Activated CD4-positive, alpha-beta T cell treated with anti-CD3 and anti-CD28 coated beads for 36 hours (primary cell): ENCODE measurements at regions of chrX and their contacts with region 1.

Region 1: GRCh38 chrX:151680805-151681204 is 14.5 kb upstream of the PRRG3 start:
- DNase-seq: peak; percentile 75
- ATAC-seq: peak; percentile 63
- H3K4me3 Mint-ChIP-seq: no peak overlapping the region
- H3K27ac Mint-ChIP-seq: no peak overlapping the region
- H3K4me1 Mint-ChIP-seq: no peaks in the 10 kb centered on the region
- H3K27me3 Mint-ChIP-seq: peaks cover 13% of the 10 kb centered on the region

Region 2: GRCh38 chrX:150772150-150772970 is 908.4 kb before region 1 on chrX:
- CTCF ChIA-PET with region 1: no interaction called
- POLR2A ChIA-PET with region 1: no interaction called
- intact Hi-C with region 1: loop called in 1 of 2 experiments (anchors 5 kb)
- DNase-seq: peak; percentile 87
- ATAC-seq: peak; percentile 82
- H3K4me3 Mint-ChIP-seq: no peak overlapping the region
- H3K27ac Mint-ChIP-seq: no peak overlapping the region
- H3K4me1 Mint-ChIP-seq: peaks cover 6% of the 10 kb centered on the region
- H3K27me3 Mint-ChIP-seq: no peaks in the 10 kb centered on the region

Region 3: GRCh38 chrX:151151665-151152267 is 529.0 kb before region 1 on chrX:
- CTCF ChIA-PET with region 1: interaction called, 6 read pairs
- POLR2A ChIA-PET with region 1: no interaction called
- intact Hi-C with region 1: loop called (anchors 1 kb)
- DNase-seq: peak; percentile 38
- ATAC-seq: peak; percentile 53
- H3K4me3 Mint-ChIP-seq: no peak overlapping the region
- H3K27ac Mint-ChIP-seq: no peak overlapping the region
- H3K4me1 Mint-ChIP-seq: no peaks in the 10 kb centered on the region
- H3K27me3 Mint-ChIP-seq: peaks cover 12% of the 10 kb centered on the region

Region 4: DNA sequence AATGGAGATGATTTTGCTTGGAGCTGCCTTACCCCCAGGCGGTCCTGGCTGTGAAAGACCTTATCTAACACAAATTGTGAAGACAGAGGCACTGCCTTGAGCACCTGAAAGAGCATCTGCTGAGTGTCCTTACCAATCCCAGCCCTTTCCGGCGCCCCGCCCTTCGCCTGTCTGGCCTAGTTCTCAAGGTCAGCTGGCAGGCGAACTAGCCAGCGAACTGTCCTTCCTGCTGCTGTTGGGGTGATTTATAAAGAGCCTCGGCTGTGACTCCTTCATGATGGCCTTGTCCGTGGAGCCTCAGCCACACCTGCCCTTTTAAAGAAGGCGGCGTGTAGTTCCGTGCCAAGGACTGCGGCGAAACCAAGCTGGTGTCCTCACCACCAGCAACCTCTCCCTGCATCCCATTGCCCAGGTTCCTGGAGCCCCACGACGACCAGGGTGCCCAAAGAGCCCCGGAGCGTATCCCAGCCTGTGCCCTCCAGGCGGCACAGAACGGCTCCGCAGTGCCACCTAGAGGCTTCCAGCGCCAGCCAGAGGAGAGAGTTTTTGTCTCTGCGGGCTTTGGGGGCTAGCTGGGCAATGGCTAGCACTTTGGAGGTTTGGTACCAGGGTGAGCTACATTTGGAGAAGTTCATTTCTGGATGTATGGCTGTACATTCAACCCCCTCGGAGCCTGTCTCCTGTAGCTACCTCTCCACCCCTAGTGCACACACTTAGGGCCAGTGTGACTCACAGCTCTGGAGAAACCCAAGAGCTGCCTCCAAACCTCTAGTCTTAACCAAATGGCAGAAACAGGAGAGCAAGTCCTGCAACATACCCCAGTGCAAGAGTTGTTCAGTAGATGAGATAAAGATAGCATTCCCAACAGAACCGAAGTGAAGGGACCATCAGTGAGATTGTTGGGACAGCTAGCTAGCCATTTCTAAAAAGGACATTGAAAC is 320.6 kb before region 1 on chrX:
- CTCF ChIA-PET with region 1: no interaction called
- POLR2A ChIA-PET with region 1: no interaction called
- intact Hi-C with region 1: loop called in 1 of 2 experiments (anchors 5 kb)
- DNase-seq: peak; percentile 62
- ATAC-seq: peak; percentile 57
- H3K4me3 Mint-ChIP-seq: peak overlapping the region; percentile 32
- H3K27ac Mint-ChIP-seq: no peak overlapping the region
- H3K4me1 Mint-ChIP-seq: no peaks in the 10 kb centered on the region
- H3K27me3 Mint-ChIP-seq: peaks cover 8% of the 10 kb centered on the region

Region 5: DNA sequence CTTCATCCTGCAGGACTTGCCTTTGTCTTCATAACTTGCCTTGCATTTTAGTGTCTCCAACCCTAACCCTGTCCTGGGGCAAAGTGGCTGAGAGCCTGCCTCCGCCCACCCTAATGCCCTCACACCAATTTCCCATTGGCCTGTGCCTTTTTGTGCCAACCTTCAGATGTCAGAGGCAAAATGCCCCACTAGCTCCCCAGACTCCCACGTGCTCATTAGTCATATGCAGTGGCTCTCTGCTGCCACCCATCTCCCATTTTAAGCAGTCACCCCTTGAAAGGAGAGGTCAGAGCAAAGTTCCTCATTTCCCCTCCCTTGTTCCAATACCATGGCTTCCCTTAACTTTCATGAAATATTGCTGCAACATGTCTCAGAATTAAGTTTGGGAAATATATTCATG is 192.1 kb before region 1 on chrX:
- CTCF ChIA-PET with region 1: no interaction called
- POLR2A ChIA-PET with region 1: no interaction called
- intact Hi-C with region 1: loop called in 1 of 2 experiments (anchors 5 kb)
- DNase-seq: peak; percentile 35
- ATAC-seq: peak; percentile 55
- H3K4me3 Mint-ChIP-seq: no peak overlapping the region
- H3K27ac Mint-ChIP-seq: no peak overlapping the region
- H3K4me1 Mint-ChIP-seq: peaks cover 3% of the 10 kb centered on the region
- H3K27me3 Mint-ChIP-seq: no peaks in the 10 kb centered on the region

Region 6: DNA sequence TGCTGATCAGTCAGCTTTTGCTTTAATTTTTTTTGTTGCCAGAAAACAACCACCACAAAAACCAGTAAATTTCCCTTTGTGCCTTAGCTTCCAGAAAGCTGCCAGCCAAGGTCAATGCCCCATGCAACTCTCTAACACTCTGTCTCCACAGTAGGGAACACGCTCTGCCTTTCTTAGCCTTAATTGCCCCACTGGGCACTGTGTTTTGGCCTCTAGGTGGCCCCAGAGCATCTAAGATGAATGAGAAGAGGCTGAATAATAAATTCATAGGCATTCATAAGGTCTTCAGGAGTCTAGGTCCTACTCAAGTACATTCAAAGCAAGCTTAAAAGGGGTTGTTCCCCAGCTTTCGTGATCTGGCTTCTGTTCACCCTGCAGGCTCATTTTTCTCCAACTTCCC is 175.0 kb before region 1 on chrX:
- CTCF ChIA-PET with region 1: interaction called, 5 read pairs
- POLR2A ChIA-PET with region 1: no interaction called
- intact Hi-C with region 1: loop called (anchors 5 kb)
- DNase-seq: peak; percentile 24
- ATAC-seq: no peak
- H3K4me3 Mint-ChIP-seq: no peak overlapping the region
- H3K27ac Mint-ChIP-seq: no peak overlapping the region
- H3K4me1 Mint-ChIP-seq: no peaks in the 10 kb centered on the region
- H3K27me3 Mint-ChIP-seq: peaks cover 8% of the 10 kb centered on the region

Region 7: DNA sequence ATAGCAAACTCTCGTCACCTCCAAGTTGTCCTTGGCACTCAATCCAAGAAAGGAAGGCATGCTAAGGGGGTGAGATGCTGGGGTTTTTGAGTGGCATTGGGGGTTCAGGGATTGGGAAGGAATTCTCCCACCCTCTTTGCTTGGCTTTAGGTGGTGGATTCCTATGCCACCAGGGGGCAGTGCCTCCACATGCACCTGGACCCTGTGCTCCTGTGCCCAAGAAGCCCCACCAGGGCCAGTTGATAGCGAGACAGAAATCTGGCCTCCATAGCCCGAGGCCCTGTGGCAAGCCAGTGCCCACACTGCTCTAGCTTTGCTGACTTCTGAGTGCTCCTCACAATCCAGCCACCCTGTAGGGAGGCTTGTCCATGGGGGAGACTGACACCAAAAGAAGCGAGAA is 33.1 kb after region 1 on chrX:
- CTCF ChIA-PET with region 1: no interaction called
- POLR2A ChIA-PET with region 1: no interaction called
- intact Hi-C with region 1: no loop called
- DNase-seq: peak; percentile 34
- ATAC-seq: no peak
- H3K4me3 Mint-ChIP-seq: no peak overlapping the region
- H3K27ac Mint-ChIP-seq: no peak overlapping the region
- H3K4me1 Mint-ChIP-seq: no peaks in the 10 kb centered on the region
- H3K27me3 Mint-ChIP-seq: peaks cover 6% of the 10 kb centered on the region

Region 8: DNA sequence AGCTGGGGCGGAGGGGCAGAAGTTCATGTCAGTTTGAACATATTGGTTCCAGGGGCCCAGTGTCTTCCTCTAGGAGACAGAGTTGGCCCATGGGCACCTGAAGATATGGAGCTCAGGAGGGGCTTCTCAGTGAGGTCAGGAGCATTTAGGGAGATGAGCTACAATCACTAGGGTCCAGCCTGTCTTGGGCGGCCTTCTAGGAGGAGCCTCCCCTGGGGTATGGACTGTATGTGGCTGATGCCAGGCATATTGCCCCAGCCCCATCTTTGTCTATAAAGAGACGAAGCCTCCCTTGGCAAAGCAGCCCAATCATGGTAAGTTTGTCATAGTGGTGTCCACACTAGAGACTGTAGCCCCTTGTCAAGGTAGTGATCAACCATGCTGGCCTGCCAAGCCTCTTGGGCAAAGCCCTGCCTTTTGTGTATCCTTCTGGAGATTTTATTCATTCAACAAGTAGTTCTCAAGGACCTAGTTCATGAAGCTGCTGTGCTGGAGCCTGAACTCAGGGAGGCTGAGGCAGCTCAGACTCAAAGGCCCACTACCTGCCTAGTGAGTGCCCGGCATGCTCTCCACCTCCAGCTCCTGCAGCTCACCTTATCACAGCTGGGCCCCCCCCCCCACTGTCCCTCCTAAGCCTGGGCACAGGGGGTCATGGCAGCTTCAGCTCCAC is 48.4 kb after region 1 on chrX:
- CTCF ChIA-PET with region 1: no interaction called
- POLR2A ChIA-PET with region 1: no interaction called
- intact Hi-C with region 1: no loop called
- DNase-seq: no peak
- ATAC-seq: no peak
- H3K4me3 Mint-ChIP-seq: no peak overlapping the region
- H3K27ac Mint-ChIP-seq: no peak overlapping the region
- H3K4me1 Mint-ChIP-seq: no peaks in the 10 kb centered on the region
- H3K27me3 Mint-ChIP-seq: peaks cover 2% of the 10 kb centered on the region